ENCODE measurements at regions of chr20 and their contacts with region 1.

Region 1: GRCh38 chr20:34704177-34705007 is at the start of gene TP53INP2:
- H3K4me3 Mint-ChIP-seq: peak within 1 kb of the TSS; percentile 99
- H3K27ac Mint-ChIP-seq: peak within 1 kb of the TSS; percentile 94
- H3K4me1 Mint-ChIP-seq: peaks cover 44% of the 10 kb centered on the region
- H3K27me3 Mint-ChIP-seq: peaks cover 34% of the 10 kb centered on the region

Region 2: GRCh38 chr20:34538671-34539123 is 165.7 kb before region 1 on chr20:
- intact Hi-C with region 1: loop called (anchors 2 kb)
- H3K4me3 Mint-ChIP-seq: no peak overlapping the region
- H3K27ac Mint-ChIP-seq: no peak overlapping the region
- H3K4me1 Mint-ChIP-seq: no peaks in the 10 kb centered on the region
- H3K27me3 Mint-ChIP-seq: no peaks in the 10 kb centered on the region

Region 3: DNA sequence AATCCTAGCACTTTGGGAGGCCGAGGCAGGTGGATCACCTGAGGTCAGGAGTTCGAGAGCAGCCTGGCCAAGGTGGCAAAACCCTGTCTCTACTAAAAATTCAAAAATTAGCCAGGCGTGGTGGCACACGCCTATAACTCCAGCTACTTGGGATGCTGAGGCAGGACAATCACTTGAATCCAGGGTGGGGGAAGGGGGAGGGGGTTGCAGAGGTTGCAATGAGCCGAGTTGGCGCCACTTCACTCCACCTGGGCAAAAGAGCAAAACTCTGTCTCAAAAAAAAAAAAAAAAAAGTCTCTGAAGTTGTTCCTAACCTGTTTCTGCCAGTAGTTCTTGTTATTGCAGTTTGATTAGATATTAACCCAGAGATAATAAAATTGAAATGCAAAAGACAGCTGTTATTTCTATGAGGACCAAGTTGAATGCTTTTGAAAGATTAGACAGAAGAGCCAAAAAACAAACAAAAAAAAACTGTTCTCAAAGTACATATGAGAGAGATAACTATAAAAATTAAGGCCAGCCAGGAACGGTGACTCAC is 50.1 kb before region 1 on chr20:
- intact Hi-C with region 1: no loop called
- H3K4me3 Mint-ChIP-seq: no peak overlapping the region
- H3K27ac Mint-ChIP-seq: no peak overlapping the region
- H3K4me1 Mint-ChIP-seq: no peaks in the 10 kb centered on the region
- H3K27me3 Mint-ChIP-seq: no peaks in the 10 kb centered on the region

Region 4: GRCh38 chr20:34676642-34677373 is 27.6 kb before region 1 on chr20 and contains the start of gene PIGU:
- intact Hi-C with region 1: loop called (anchors 2 kb)
- H3K4me3 Mint-ChIP-seq: peak within 1 kb of the TSS; percentile 82
- H3K27ac Mint-ChIP-seq: peak within 1 kb of the TSS; percentile 92
- H3K4me1 Mint-ChIP-seq: peaks cover 19% of the 10 kb centered on the region
- H3K27me3 Mint-ChIP-seq: no peaks in the 10 kb centered on the region

Measured in dendritic cell treated with granulocyte-macrophage colony-stimulating factor and Interleukin-4, amounts not matched to agents 40 ng/mL and 50 ng/mL, for 4 days (primary cell).